ENCODE measurements at regions of chr11 and their contacts with region 1.

Region 1: DNA sequence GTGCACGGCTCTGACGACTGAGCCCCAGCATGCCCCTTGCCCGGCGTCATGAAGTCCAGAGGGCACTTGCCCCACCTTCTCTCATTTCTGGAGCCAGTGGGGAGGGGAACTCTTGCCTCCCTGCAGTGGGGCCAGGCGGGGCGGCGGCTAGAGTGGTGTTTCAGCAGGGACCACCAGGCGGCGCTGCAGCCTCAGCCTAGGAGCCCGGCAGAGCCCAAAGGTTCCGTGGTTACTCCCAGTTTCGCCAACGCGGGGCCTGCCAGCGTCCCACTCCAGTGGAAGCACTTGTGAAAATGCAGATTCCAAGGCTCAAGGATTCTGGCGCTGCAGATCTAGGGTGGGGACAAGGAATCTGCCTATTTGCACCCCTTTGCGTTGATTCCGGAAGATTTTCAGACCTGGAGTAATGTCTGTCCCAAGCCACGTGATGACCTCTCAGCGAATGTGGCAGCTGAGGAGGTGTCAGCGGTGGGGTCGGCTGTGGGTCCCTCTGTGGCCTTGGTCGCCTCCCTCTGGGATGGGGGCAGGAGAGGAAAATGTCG is 55.7 kb downstream of the CD82 start:
- DNase-seq: peak; percentile 46 to 98
- H3K4me3 ChIP-seq: peak overlapping the region in 3 of 4 experiments; percentile 30 to 53 (median 40); a peak in 6 of 8 replicates
- H3K27ac ChIP-seq: no peak overlapping the region
- H3K4me1 ChIP-seq: peaks cover 0 to 3% (median 0%) of the 10 kb centered on the region in 4 experiments; a peak in 3 of 7 replicates
- H3K27me3 ChIP-seq: peaks cover 0 to 9% (median 7%) of the 10 kb centered on the region in 4 experiments; a peak in 4 of 7 replicates
- CTCF ChIP-seq: peak; percentile 92 to 96 (median 95)
- EP300 ChIP-seq: no peak
- POLR2A ChIP-seq: no peak
- RAD21 ChIP-seq: peak; percentile 98 to 99

Region 2: DNA sequence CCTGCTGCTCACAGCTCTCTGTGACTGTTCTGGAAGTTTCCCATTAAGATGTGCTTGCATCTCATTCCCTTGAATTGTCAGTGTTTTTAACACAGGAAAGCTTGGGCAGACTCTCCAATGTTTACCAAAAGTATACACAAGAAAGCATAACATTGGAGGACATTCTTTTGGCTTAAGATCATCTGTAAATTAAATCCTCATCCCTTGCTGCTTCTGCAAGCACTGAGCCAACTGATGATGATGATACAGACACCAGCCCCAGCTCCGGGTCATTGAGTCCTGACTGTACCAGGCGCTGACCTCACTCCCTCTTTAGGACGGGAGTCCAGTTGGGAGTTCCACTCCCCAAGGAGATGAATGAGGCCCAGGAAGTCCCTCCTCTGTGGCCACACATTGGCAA is 31.9 kb before region 1 on chr11:
- CTCF ChIA-PET with region 1: interaction called, 13 read pairs
- POLR2A ChIA-PET with region 1: no interaction called
- DNase-seq: no peak
- H3K4me3 ChIP-seq: no peak overlapping the region
- H3K27ac ChIP-seq: no peak overlapping the region
- H3K4me1 ChIP-seq: peaks cover 0 to 4% (median 0%) of the 10 kb centered on the region in 4 experiments; a peak in 4 of 7 replicates
- H3K27me3 ChIP-seq: no peaks in the 10 kb centered on the region
- CTCF ChIP-seq: no peak
- EP300 ChIP-seq: no peak
- POLR2A ChIP-seq: no peak
- RAD21 ChIP-seq: no peak

Region 3: DNA sequence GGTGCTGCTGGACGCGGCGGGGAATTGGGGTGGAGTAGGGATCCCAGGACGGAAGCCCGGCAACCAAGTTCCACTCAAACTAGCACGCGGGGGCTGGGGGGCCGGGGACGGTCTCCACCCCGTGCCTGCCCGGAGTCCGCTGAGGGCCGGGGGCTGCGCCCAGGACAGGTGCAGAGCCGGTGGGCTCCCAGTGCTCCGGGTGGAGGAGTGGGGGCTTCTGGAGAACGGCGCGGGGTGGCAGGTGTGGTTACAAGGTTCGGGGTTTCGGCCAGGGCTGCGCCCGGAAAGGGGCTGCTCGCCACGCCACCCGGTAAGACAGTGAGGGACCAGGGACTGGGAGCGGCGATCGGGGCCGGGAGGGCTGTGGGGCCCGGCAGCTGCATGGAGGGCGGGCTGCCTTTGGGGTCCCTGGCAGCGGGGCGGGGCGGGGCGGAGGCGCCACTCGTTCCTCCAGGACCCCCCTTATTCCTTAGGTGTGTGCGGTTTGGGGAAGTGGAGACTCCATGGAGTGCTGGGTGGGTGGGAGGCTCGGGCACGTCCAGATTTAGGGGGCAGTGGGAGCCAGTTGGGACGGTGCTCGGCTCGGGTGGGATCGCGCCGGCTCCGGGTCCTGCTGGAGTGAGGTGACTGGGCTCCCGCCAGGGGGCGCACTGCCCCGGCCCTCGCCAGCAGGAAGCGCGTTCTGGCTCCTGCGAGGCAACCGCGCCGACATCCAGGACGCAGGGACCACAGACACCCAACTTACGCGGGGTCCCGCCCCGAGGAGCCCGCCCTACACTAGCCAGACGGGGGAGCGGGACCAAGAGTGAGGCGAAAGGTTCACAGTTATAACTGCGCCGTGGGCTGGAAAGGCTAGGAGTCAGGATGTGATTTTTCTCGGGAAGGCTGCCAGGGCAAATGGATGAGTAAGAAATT is 106.4 kb after region 1 on chr11:
- CTCF ChIA-PET with region 1: interaction called, 16 read pairs
- POLR2A ChIA-PET with region 1: interaction called, 5 read pairs
- DNase-seq: peak in 1 of 2 experiments; percentile 93
- H3K4me3 ChIP-seq: peak overlapping the region; percentile 14 to 73 (median 50)
- H3K27ac ChIP-seq: no peak overlapping the region
- H3K4me1 ChIP-seq: peaks cover 24 to 41% (median 26%) of the 10 kb centered on the region in 4 experiments
- H3K27me3 ChIP-seq: peaks cover 26 to 66% (median 57%) of the 10 kb centered on the region in 4 experiments
- CTCF ChIP-seq: peak; percentile 81 to 94 (median 89)
- EP300 ChIP-seq: no peak
- POLR2A ChIP-seq: no peak
- RAD21 ChIP-seq: peak; percentile 80 to 85

Region 4: DNA sequence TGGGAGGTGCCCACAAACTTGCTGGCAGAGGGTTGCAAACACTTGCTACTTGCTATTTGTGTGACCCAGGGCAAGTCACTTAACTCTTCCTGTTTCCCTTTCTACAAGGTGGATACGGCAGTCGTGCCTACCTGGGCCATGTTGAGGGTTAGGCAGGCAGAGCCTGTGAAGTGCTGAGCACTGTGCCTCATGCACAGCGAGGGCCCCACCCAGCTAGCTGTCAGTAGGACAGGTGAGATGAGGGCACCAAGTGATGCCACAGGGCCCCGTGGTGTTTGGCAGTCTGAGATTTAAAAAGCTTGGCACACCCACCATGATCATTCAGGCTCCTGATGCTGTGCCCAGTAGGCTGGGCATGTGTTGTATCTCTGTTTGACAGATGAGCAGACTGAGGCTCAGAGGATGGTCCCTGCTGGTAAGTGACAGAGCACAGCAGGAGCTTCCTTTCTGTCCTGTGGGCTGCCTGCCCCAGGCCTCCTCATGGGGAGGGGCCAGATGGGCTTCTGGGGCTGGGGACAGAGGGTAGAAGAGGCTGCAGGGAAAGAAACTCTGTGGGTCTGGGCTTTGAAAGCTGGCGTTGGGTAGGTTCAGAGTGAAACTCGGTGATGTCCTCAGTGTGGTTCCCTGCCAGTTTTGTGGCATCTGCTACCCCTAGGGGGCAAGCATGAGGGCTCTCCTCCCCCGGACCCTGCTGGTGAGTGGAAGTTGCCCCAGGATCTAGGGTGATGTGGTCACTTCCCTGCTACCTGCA is 164.8 kb after region 1 on chr11:
- CTCF ChIA-PET with region 1: interaction called, 14 read pairs
- POLR2A ChIA-PET with region 1: no interaction called
- DNase-seq: no peak
- H3K4me3 ChIP-seq: peak overlapping the region in 1 of 4 experiments; percentile 9; a peak in 1 of 8 replicates
- H3K27ac ChIP-seq: no peak overlapping the region
- H3K4me1 ChIP-seq: peaks cover 8 to 19% (median 19%) of the 10 kb centered on the region in 4 experiments
- H3K27me3 ChIP-seq: peaks cover 0 to 4% (median 0%) of the 10 kb centered on the region in 4 experiments; a peak in 1 of 7 replicates
- CTCF ChIP-seq: peak; percentile 51 to 62 (median 58)
- EP300 ChIP-seq: no peak
- POLR2A ChIP-seq: no peak
- RAD21 ChIP-seq: peak; percentile 24 to 54; a peak in 3 of 4 replicates

Region 5: GRCh38 chr11:44911029-44911814 is 290.0 kb after region 1 on chr11:
- CTCF ChIA-PET with region 1: interaction called, 57 read pairs
- POLR2A ChIA-PET with region 1: interaction called, 3 read pairs
- DNase-seq: peak; percentile 82 to 95
- H3K4me3 ChIP-seq: peak overlapping the region in 2 of 4 experiments; percentile 10 to 47; a peak in 3 of 8 replicates
- H3K27ac ChIP-seq: no peak overlapping the region
- H3K4me1 ChIP-seq: peaks cover 0 to 29% (median 6%) of the 10 kb centered on the region in 4 experiments; a peak in 6 of 7 replicates
- H3K27me3 ChIP-seq: no peaks in the 10 kb centered on the region; a peak in 2 of 7 replicates
- CTCF ChIP-seq: peak; percentile 52 to 79 (median 67)
- EP300 ChIP-seq: 0 out of 3 replicates have a peak, but pooled peaks of 1 of the 2 experiments have one; percentile 7
- POLR2A ChIP-seq: no peak
- RAD21 ChIP-seq: peak; percentile 74 to 82